Aorta (tissue), 5 donors: ENCODE measurements at regions of chr15 and their contacts with region 1.

Region 1: GRCh38 chr15:62847900-62848489 is 194.6 kb upstream of the TPM1 start:
- DNase-seq: peak; percentile 81 to 89
- ATAC-seq: peak; percentile 69
- H3K4me3 ChIP-seq: no peak overlapping the region
- H3K27ac ChIP-seq: no peak overlapping the region
- H3K4me1 ChIP-seq: no peaks in the 10 kb centered on the region
- H3K27me3 ChIP-seq: no peaks in the 10 kb centered on the region

Region 2: GRCh38 chr15:62782039-62782791 is 65.8 kb before region 1 on chr15:
- intact Hi-C with region 1: loop called in 1 of 2 experiments (anchors 2 kb)
- DNase-seq: peak; percentile 82 to 87
- ATAC-seq: peak; percentile 89
- H3K4me3 ChIP-seq: no peak overlapping the region
- H3K27ac ChIP-seq: peak overlapping the region in 1 of 2 donors; percentile 84
- H3K4me1 ChIP-seq: no peaks in the 10 kb centered on the region
- H3K27me3 ChIP-seq: no peaks in the 10 kb centered on the region

Region 3: DNA sequence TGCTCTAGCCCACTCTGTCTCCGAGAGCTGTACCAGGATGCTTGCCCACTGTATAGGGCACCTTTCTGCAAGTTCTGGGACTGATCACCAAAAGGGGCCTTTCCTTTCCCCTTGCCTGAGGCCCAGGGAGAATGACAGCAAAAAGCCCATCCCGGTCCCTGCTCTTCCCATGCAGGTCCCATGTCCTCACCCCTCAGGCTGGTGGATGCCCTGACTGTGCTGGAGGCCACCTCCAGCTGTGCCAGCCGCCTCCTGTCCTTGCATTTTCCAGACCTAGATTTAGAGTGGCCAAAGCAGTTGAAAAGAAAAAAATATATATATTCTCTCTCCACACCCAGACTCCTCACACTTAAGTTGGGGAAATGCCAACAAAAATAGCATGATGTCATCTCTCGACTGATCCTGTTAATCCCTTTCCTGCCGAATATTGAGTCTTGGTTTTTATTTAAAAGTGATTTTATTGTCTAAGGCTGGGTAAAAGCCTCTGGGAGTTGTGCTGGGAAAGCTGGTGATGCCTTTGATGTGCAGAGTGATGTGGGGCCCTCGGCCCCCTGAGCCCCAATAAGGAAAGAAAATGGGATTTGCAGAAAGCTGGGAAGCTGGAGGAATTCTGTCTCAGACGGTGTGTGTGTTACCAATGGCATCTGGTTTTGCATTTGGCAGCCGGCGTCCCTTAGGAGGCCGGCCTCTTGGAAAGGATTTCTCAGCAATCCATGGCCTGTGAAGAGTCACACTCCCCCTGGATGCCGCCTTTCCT is 165.2 kb after region 1 on chr15:
- intact Hi-C with region 1: no loop called
- DNase-seq: peak in 1 of 2 donors; percentile 66
- ATAC-seq: peak; percentile 53
- H3K4me3 ChIP-seq: no peak overlapping the region
- H3K27ac ChIP-seq: peak overlapping the region in 1 of 2 donors; percentile 87
- H3K4me1 ChIP-seq: no peaks in the 10 kb centered on the region
- H3K27me3 ChIP-seq: no peaks in the 10 kb centered on the region

Region 4: GRCh38 chr15:63048115-63048775 is 200.2 kb after region 1 on chr15:
- intact Hi-C with region 1: loop called (anchors 5 kb)
- DNase-seq: peak; percentile 94 to 96
- ATAC-seq: peak; percentile 90
- H3K4me3 ChIP-seq: peak overlapping the region; percentile 95 to 98
- H3K27ac ChIP-seq: peak overlapping the region; percentile 17 to 65
- H3K4me1 ChIP-seq: peaks cover 0 to 6% of the 10 kb centered on the region in 2 donors
- H3K27me3 ChIP-seq: no peaks in the 10 kb centered on the region

Region 5: GRCh38 chr15:63093486-63094205 is 245.7 kb after region 1 on chr15:
- intact Hi-C with region 1: loop called (anchors 2 to 5 kb)
- DNase-seq: peak; percentile 86 to 89
- ATAC-seq: peak; percentile 96
- H3K4me3 ChIP-seq: no peak overlapping the region
- H3K27ac ChIP-seq: no peak overlapping the region
- H3K4me1 ChIP-seq: no peaks in the 10 kb centered on the region
- H3K27me3 ChIP-seq: no peaks in the 10 kb centered on the region

Region 6: GRCh38 chr15:63122002-63122893 is 274.3 kb after region 1 on chr15:
- intact Hi-C with region 1: no loop called
- DNase-seq: peak; percentile 92 to 93
- ATAC-seq: peak; percentile 98
- H3K4me3 ChIP-seq: peak overlapping the region; percentile 86 to 95
- H3K27ac ChIP-seq: peak overlapping the region; percentile 73 to 74
- H3K4me1 ChIP-seq: no peaks in the 10 kb centered on the region
- H3K27me3 ChIP-seq: no peaks in the 10 kb centered on the region

Region 7: DNA sequence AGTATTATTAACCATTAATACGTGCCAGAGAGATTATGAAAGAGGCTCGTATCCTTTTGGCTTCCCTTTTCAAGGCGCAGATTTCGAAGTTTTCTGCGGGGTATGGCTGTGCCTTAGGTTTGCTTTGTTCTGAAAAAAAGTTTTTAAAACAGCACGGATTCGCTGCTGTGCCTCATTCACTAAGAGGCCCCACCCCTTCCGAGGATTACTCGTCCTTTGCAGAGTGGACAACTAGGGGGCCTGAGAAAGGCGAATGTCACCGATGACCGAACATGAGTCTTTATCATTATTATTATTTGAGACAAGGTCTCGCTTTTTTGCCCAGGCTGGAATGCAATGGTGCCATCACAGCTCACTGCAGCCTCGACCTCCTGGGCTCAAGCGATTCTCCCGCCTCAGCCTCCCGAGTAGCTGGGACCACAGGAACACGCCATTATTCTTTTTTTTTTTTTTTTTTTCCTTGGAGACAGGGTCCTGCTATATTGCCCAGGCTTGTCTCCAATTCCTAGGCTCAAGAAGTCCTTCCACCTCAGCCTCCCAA is 310.0 kb after region 1 on chr15:
- intact Hi-C with region 1: no loop called
- DNase-seq: peak in 1 of 2 donors; percentile 70
- ATAC-seq: peak; percentile 71
- H3K4me3 ChIP-seq: peak overlapping the region; percentile 42 to 55
- H3K27ac ChIP-seq: peak overlapping the region; percentile 3 to 70
- H3K4me1 ChIP-seq: no peaks in the 10 kb centered on the region
- H3K27me3 ChIP-seq: peaks cover 0 to 1% of the 10 kb centered on the region in 2 donors